OCI-LY7 (cell line): ENCODE measurements at regions of chr1 and their contacts with region 1.

Region 1: GRCh38 chr1:65235867-65236805 is 73.2 kb upstream of the DNAJC6 start:
- DNase-seq: peak; percentile 73
- H3K4me3 ChIP-seq: no peak overlapping the region
- H3K27ac ChIP-seq: no peak overlapping the region
- H3K4me1 ChIP-seq: no peaks in the 10 kb centered on the region
- CTCF ChIP-seq: peak; percentile 97

Region 2: DNA sequence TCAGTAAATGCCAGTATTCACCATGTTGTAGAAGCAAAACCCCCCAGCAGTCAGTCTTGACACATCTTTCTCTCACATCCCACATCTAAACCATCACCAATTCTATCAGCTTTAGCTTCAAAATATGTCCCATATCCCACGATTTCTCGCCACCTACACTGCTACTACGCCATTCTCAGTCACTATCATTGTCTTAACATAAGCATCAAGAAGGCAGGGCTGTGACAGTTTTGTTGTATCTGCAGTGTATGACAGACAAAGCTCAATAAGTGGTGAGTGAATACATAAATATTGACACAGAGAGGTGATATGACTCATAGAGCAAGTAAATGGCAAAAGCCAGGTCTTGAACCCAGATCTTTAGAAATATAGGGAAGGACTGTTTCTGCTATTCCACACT is 329.7 kb before region 1 on chr1:
- CTCF ChIA-PET with region 1: no interaction called
- POLR2A ChIA-PET with region 1: no interaction called
- intact Hi-C with region 1: no loop called
- DNase-seq: no peak
- H3K4me3 ChIP-seq: no peak overlapping the region
- H3K27ac ChIP-seq: no peak overlapping the region
- H3K4me1 ChIP-seq: no peaks in the 10 kb centered on the region
- CTCF ChIP-seq: no peak

Region 3: DNA sequence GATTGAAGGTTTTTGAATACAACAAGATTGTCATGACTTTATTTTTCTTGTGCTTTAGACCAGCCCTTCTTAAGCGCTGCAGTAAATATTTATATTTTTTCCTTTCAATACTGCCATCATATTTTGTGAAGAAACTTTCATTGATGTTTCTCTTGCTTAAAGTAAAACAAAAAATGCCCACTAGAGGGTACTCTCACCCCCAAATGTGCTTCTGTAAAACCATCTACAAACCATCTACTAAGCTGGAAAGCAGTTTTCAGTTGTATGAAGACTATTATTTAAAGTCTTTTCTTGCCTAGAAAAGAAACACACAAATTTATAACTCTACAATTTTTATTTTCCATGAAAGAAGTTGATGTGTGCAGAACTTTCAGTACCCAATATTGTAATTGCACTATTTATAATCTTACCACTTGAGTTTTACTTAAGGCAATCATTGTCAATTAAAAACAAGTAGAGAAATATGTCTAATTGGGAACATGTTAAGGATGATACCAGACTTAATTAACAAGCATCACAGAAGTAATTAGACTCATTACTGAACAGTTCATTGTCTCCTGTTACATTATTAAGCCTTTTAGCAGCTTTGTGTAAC is 195.1 kb after region 1 on chr1:
- CTCF ChIA-PET with region 1: no interaction called
- POLR2A ChIA-PET with region 1: interaction called, 3 read pairs
- intact Hi-C with region 1: loop called (anchors 5 kb)
- DNase-seq: peak; percentile 46
- H3K4me3 ChIP-seq: no peak overlapping the region
- H3K27ac ChIP-seq: no peak overlapping the region
- H3K4me1 ChIP-seq: no peaks in the 10 kb centered on the region
- CTCF ChIP-seq: peak; percentile 89

Region 4: DNA sequence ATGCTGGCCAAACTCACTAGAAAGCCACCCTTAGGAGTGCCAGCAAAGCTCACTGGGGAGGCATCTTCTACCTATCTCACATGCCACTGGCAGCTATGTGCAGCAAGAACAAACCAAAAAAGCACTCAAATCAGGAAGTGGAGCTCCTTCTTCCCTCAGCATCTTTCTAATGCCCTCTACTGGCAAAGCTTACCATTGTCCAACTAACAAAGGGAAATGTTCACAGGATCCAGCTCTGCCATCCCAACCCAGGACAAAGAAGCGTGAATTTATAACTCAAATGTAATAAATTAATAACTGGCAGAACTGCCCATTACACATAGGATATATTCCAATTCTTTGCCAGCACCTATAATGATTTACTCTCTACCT is 223.2 kb after region 1 on chr1:
- CTCF ChIA-PET with region 1: interaction called, 6 read pairs
- POLR2A ChIA-PET with region 1: interaction called, 3 read pairs
- intact Hi-C with region 1: loop called (anchors 2 kb)
- DNase-seq: peak; percentile 55
- H3K4me3 ChIP-seq: no peak overlapping the region
- H3K27ac ChIP-seq: no peak overlapping the region
- H3K4me1 ChIP-seq: no peaks in the 10 kb centered on the region
- CTCF ChIP-seq: peak; percentile 77

Region 5: GRCh38 chr1:65687428-65688214 is 451.5 kb after region 1 on chr1:
- CTCF ChIA-PET with region 1: no interaction called
- POLR2A ChIA-PET with region 1: interaction called, 3 read pairs
- intact Hi-C with region 1: loop called (anchors 1 kb)
- DNase-seq: peak; percentile 61
- H3K4me3 ChIP-seq: no peak overlapping the region
- H3K27ac ChIP-seq: no peak overlapping the region
- H3K4me1 ChIP-seq: no peaks in the 10 kb centered on the region
- CTCF ChIP-seq: peak; percentile 87

Region 6: GRCh38 chr1:66242646-66243547 is 1006.8 kb after region 1 on chr1:
- CTCF ChIA-PET with region 1: no interaction called
- POLR2A ChIA-PET with region 1: no interaction called
- intact Hi-C with region 1: loop called (anchors 10 kb)
- DNase-seq: peak; percentile 86
- H3K4me3 ChIP-seq: no peak overlapping the region
- H3K27ac ChIP-seq: no peak overlapping the region
- H3K4me1 ChIP-seq: no peaks in the 10 kb centered on the region
- CTCF ChIP-seq: peak; percentile 100